SK-N-SH (cell line): ENCODE measurements at regions of chr16 and their contacts with region 1.

Region 1: DNA sequence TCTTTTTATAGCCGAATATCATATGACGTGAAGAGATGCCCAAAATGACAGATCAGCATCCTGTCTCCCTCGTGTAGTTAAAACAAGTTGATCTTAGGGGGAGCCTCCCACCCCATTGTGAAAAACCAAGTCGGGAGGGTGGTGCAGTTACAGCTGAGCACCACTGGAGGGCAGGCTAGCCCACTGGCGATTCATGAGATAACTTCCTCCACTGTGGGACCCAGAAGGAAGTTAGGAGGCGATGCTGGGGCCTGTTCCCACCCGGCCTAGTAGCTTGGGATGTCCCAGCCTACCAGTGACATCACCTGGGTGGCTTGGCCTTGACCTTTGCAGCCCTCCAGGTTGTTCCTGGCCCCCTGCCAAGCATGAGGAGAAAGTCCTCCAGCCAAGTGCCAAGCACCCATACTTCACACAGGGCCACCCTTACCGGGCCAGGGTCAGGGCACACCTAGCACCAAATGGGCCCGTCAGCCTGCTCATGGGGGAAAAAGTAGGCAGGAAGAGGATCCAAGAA is 8.1 kb upstream of the CPNE2 start:
- DNase-seq: peak; percentile 87
- H3K4me3 ChIP-seq: peak overlapping the region in 1 of 2 experiments; percentile 47; a peak in 1 of 4 replicates
- H3K27ac ChIP-seq: no peak overlapping the region
- H3K4me1 ChIP-seq: peaks cover 0 to 4% of the 10 kb centered on the region in 2 experiments; a peak in 1 of 4 replicates
- H3K27me3 ChIP-seq: no peaks in the 10 kb centered on the region
- CTCF ChIP-seq: peak; percentile 97
- EP300 ChIP-seq: no peak
- RAD21 ChIP-seq: peak; percentile 91

Region 2: GRCh38 chr16:57042157-57043111 is 41.9 kb before region 1 on chr16:
- CTCF ChIA-PET with region 1: no interaction called
- POLR2A ChIA-PET with region 1: no interaction called
- DNase-seq: no peak
- H3K4me3 ChIP-seq: no peak overlapping the region
- H3K27ac ChIP-seq: no peak overlapping the region
- H3K4me1 ChIP-seq: no peaks in the 10 kb centered on the region; a peak in 1 of 4 replicates
- H3K27me3 ChIP-seq: no peaks in the 10 kb centered on the region
- CTCF ChIP-seq: no peak
- EP300 ChIP-seq: no peak
- RAD21 ChIP-seq: no peak

Region 3: DNA sequence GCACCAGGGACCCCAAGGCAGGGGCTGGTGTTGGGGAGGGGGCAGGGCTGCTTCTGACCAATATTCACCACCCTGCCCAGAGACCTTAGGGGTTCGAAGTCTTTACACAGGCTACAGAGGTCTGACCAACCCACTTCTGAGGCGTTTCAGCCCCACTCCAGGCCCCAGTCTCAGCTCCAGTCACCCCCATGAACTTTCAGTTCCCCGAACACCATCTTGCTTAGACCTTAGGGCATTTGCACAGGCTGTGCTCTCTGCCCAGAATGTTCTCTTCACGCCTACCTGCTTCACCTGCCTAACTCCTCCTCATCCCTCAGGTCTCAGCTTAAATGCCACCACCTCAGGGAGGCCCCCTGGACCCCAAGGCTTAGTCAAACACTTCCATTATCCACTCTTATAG is 17.7 kb before region 1 on chr16:
- CTCF ChIA-PET with region 1: interaction called, 22 read pairs
- POLR2A ChIA-PET with region 1: interaction called, 7 read pairs
- DNase-seq: no peak
- H3K4me3 ChIP-seq: no peak overlapping the region
- H3K27ac ChIP-seq: no peak overlapping the region
- H3K4me1 ChIP-seq: peaks cover 0 to 12% of the 10 kb centered on the region in 2 experiments; a peak in 2 of 4 replicates
- H3K27me3 ChIP-seq: no peaks in the 10 kb centered on the region
- CTCF ChIP-seq: no peak
- EP300 ChIP-seq: no peak
- RAD21 ChIP-seq: no peak

Region 4: DNA sequence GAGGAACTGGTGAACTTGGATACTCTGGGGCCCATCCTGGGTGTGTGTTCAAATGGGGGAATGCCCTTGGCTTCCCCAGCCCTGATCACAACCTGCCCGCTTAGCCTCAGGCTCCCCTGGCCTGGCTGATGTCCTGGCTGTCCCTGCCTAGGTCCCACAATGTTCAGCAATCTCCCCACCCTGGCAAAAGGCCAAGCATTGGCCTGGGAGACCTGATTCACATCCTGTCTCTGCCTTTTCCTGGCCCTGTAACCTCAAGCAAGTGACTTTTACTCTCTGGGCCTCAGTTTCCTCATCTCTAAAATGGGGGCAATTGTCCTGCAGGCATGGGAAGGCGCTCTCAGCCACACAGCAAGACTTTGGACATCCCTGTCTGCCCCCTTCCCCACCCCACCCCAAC is 22.5 kb after region 1 on chr16:
- CTCF ChIA-PET with region 1: interaction called, 10 read pairs
- POLR2A ChIA-PET with region 1: no interaction called
- DNase-seq: peak; percentile 65
- H3K4me3 ChIP-seq: no peak overlapping the region
- H3K27ac ChIP-seq: no peak overlapping the region; a peak in 1 of 4 replicates
- H3K4me1 ChIP-seq: peaks cover 0 to 16% of the 10 kb centered on the region in 2 experiments; a peak in 1 of 4 replicates
- H3K27me3 ChIP-seq: no peaks in the 10 kb centered on the region
- CTCF ChIP-seq: no peak
- EP300 ChIP-seq: no peak
- RAD21 ChIP-seq: no peak

Region 5: DNA sequence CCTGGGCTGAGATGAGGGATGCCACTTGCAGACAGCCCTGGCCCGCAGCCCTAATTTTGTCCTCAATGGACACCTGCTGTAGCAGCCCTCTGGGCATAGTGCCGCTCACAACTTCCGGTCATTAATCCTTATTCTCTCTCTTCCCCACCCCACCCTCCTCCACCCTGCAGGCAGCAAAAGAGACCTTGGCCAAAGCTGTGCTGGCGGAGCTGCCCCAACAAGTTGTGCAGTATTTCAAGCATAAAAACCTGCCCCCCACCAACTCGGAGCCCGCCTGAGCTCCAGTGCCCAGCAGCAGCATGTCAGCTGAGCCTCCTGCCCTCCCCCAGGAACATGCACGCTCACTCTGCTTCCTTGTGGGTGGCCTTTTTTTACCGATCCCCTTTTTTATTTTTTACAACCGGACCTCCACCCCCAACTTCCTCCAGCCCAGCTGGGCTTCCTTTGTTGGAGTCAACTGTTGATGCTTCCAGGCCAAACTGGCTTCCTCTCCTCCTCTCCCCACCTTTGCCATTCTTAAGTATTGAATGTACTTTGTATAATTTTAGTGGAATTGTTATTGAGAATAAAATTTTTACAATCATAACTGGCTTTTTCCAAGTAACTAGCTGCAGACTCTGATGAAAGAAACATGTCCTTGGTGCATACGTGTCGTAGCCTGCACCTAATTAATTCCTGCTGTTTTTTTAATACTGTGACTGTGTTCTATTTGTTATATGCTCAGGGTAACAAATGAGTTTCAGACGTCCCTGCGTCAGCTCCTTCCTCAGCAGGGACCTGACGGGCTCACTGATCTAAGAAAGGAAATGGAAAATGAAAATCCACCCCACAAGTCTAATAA is 63.3 kb after region 1 on chr16:
- CTCF ChIA-PET with region 1: interaction called, 21 read pairs
- POLR2A ChIA-PET with region 1: no interaction called
- DNase-seq: peak; percentile 59
- H3K4me3 ChIP-seq: no peak overlapping the region
- H3K27ac ChIP-seq: peak overlapping the region in 1 of 2 experiments; percentile 82; a peak in 2 of 4 replicates
- H3K4me1 ChIP-seq: peaks cover 19 to 48% of the 10 kb centered on the region in 2 experiments; a peak in 3 of 4 replicates
- H3K27me3 ChIP-seq: no peaks in the 10 kb centered on the region
- CTCF ChIP-seq: no peak
- EP300 ChIP-seq: no peak
- RAD21 ChIP-seq: no peak

Region 6: DNA sequence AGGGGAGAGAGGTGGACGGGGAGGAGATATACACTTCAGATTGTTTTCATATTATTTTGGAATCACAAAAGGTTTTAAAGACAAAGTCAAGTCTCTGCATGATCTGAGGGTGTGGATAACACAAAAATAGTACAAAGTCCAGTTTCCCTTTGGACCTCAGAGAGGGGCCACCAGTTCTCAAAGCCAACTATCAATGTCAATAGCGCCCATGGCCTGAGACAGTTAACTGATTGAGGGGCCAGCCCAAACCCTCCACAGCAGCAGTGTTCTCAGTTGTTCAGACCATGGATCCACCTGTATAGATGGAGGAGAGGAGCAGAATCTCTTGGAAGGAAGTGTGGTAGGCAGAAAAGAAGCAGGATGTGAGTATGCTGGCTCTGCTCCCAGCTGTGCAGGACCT is 88.6 kb after region 1 on chr16:
- CTCF ChIA-PET with region 1: interaction called, 11 read pairs
- POLR2A ChIA-PET with region 1: no interaction called
- DNase-seq: no peak
- H3K4me3 ChIP-seq: no peak overlapping the region
- H3K27ac ChIP-seq: no peak overlapping the region
- H3K4me1 ChIP-seq: no peaks in the 10 kb centered on the region; a peak in 2 of 4 replicates
- H3K27me3 ChIP-seq: no peaks in the 10 kb centered on the region
- CTCF ChIP-seq: no peak
- EP300 ChIP-seq: no peak
- RAD21 ChIP-seq: no peak